ENCODE measurements at regions of chr11 and their contacts with region 1.

Region 1: DNA sequence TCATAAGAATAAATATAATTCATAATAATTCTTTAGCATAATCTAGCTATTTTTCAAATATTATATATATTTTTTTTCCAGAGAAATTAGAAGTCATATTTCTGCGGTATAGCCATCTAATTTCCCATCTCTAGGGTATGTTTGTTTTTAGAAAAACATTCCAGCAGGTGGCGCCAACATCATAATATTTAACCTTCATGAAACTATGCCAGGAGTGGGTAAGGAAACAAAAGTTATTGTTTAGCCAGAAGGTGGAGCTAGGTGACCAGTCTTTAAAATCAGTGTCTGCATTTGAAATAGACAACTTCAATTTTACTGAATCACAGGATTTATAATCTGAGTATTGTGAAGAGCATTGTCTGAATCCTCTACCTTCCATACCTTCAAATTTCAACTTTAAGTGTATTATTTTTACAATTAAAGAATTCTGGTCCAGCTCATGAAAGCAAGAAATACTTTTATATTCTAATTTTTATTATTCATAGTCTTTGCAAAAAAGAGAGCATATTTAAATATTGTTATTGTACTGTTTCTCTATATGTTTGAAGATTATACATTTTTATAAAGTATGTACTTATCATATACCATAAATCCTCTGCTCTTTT is 15.7 kb upstream of the CCDC179 start:
- DNase-seq: peak; percentile 26 to 81
- ATAC-seq: peak; percentile 82 to 100 (median 96)
- H3K4me3 ChIP-seq: no peak overlapping the region
- H3K4me3 Mint-ChIP-seq: no peak overlapping the region
- H3K27ac ChIP-seq: no peak overlapping the region
- H3K27ac Mint-ChIP-seq: no peak overlapping the region
- H3K4me1 ChIP-seq: no peaks in the 10 kb centered on the region
- H3K4me1 Mint-ChIP-seq: no peaks in the 10 kb centered on the region
- H3K27me3 ChIP-seq: no peaks in the 10 kb centered on the region
- H3K27me3 Mint-ChIP-seq: no peaks in the 10 kb centered on the region
- CTCF ChIP-seq: peak; percentile 88

Region 2: DNA sequence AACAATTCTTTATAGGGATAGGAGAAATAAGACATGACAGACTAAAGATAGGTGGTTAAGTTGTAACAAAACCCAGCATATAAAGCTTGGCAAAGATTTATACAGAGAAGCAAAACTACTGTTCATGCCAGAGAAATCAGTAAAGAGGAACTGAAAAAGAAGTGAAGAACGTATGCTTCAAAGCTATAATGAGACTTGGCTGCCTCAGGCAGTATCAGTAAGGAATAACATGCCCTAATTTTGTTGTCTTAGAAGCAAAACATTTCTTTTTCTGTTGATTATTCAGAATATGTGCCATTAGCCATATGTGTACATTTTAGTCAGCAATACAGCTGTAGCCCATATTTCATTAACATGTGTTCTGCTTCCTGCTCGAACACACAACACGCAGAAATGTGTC is 1803.4 kb before region 1 on chr11:
- intact Hi-C with region 1: no loop called
- DNase-seq: no peak
- ATAC-seq: no peak
- H3K4me3 ChIP-seq: no peak overlapping the region
- H3K4me3 Mint-ChIP-seq: no peak overlapping the region
- H3K27ac ChIP-seq: no peak overlapping the region
- H3K27ac Mint-ChIP-seq: no peak overlapping the region
- H3K4me1 ChIP-seq: no peaks in the 10 kb centered on the region
- H3K4me1 Mint-ChIP-seq: no peaks in the 10 kb centered on the region
- H3K27me3 ChIP-seq: no peaks in the 10 kb centered on the region
- H3K27me3 Mint-ChIP-seq: no peaks in the 10 kb centered on the region
- CTCF ChIP-seq: no peak

Region 3: GRCh38 chr11:23021287-23021863 is 145.4 kb after region 1 on chr11:
- intact Hi-C with region 1: no loop called
- DNase-seq: peak in 1 of 2 donors; percentile 10
- ATAC-seq: peak; percentile 48 to 64 (median 53)
- H3K4me3 ChIP-seq: no peak overlapping the region
- H3K4me3 Mint-ChIP-seq: no peak overlapping the region
- H3K27ac ChIP-seq: no peak overlapping the region
- H3K27ac Mint-ChIP-seq: no peak overlapping the region
- H3K4me1 ChIP-seq: no peaks in the 10 kb centered on the region
- H3K4me1 Mint-ChIP-seq: peaks cover 6 to 8% of the 10 kb centered on the region in 2 donors
- H3K27me3 ChIP-seq: no peaks in the 10 kb centered on the region
- H3K27me3 Mint-ChIP-seq: no peaks in the 10 kb centered on the region
- CTCF ChIP-seq: peak; percentile 68

Region 4: GRCh38 chr11:24386546-24387397 is 1510.8 kb after region 1 on chr11:
- intact Hi-C with region 1: loop called (anchors 2 kb)
- DNase-seq: no peak
- ATAC-seq: no peak
- H3K4me3 ChIP-seq: no peak overlapping the region
- H3K4me3 Mint-ChIP-seq: no peak overlapping the region
- H3K27ac ChIP-seq: no peak overlapping the region
- H3K27ac Mint-ChIP-seq: no peak overlapping the region
- H3K4me1 ChIP-seq: no peaks in the 10 kb centered on the region
- H3K4me1 Mint-ChIP-seq: peaks cover 5 to 12% of the 10 kb centered on the region in 2 donors
- H3K27me3 ChIP-seq: no peaks in the 10 kb centered on the region
- H3K27me3 Mint-ChIP-seq: no peaks in the 10 kb centered on the region
- CTCF ChIP-seq: peak; percentile 49